Calu3 (cell line): ENCODE measurements at regions of chr2 and their contacts with region 1.

Region 1: DNA sequence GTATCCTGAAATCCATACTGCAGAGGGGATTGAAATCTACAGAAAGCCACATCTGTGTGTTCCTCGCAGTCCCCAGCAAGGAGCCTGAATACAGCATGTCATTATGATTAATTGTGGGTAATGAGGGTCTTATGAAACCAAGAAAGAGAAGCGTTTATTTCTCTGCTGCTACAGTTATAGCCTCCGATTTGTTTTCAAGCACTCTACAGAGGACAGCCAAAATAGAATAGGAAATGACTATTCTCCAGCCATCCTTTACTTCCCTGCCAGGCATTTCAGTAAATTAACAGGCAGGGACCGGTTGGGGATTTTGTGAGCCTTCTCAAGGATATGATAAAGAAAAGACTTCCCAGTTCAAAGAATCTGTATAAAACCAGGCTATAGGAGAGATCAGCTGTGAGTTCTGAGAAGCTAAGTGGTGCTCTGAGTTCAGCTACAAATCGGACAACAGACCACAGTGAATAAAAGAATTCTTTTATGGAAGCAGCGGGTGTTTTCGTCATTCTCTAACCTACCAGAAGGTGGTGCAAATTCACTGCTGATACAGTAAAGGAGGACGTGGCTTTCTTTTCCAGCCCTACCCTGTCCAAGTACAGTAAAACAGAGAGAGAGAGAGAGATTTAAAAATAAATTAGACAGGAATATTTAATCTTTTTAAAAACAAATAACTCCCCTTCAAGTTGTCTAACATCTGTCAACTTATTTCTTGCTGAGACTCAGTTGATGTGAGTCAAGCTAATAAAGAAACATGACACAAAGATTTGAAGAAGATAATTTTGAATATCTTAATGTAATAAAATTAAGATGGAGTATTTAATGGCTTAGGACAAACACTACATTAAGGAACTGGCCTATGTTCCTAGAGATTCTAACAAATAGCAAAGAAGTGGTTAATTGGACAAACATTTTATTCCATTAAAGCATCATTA is 133.7 kb downstream of the INSIG2 start:
- DNase-seq: peak; percentile 71
- H3K4me3 Mint-ChIP-seq: no peak overlapping the region
- H3K27ac Mint-ChIP-seq: peak overlapping the region; percentile 65
- H3K4me1 Mint-ChIP-seq: peaks cover 25% of the 10 kb centered on the region
- H3K27me3 Mint-ChIP-seq: no peaks in the 10 kb centered on the region
- CTCF ChIP-seq: peak; percentile 57

Region 2: GRCh38 chr2:118185210-118186109 is 36.5 kb before region 1 on chr2:
- CTCF ChIA-PET with region 1: no interaction called
- intact Hi-C with region 1: no loop called
- DNase-seq: peak; percentile 70
- H3K4me3 Mint-ChIP-seq: peak overlapping the region; percentile 85
- H3K27ac Mint-ChIP-seq: peak overlapping the region; percentile 91
- H3K4me1 Mint-ChIP-seq: peaks cover 37% of the 10 kb centered on the region
- H3K27me3 Mint-ChIP-seq: no peaks in the 10 kb centered on the region
- CTCF ChIP-seq: no peak

Region 3: DNA sequence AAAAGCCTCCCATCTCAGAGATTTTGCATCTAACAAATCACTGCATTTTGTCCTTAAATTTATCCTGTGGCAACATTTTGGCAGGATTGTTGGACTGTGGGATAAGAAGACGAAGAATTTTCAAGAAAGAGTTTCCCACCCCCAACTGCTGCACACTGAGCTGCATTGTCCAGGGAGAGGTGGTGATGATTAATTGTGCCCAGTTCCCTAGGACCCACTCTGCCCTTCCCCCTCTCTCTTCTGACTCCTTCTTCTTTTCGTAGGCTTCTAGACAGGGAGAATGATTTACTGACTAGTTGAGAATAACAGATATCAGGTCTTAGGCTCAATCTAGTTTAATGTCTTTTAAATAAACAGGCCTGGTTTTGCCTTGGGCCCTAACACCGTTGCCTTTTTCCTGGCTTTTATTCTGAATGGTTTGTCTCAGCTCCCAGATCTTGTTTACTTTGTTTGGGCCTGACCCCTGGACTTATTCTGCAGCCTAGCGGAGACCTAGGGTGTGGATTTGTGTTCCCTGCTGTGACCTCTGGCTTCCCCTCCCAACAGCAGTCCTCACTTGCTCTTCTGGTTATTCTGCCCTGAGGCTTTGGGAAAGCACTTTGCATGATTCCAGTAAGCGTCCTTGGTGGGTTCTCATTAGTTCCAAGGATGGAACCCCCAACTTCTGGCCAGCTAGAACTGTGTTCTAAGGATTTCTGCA is 99.7 kb after region 1 on chr2:
- CTCF ChIA-PET with region 1: no interaction called
- intact Hi-C with region 1: loop called (anchors 5 kb)
- DNase-seq: peak; percentile 15
- H3K4me3 Mint-ChIP-seq: no peak overlapping the region
- H3K27ac Mint-ChIP-seq: no peak overlapping the region
- H3K4me1 Mint-ChIP-seq: peaks cover 28% of the 10 kb centered on the region
- H3K27me3 Mint-ChIP-seq: no peaks in the 10 kb centered on the region
- CTCF ChIP-seq: no peak

Region 4: GRCh38 chr2:118371515-118371914 is 149.6 kb after region 1 on chr2:
- CTCF ChIA-PET with region 1: interaction called, 3 read pairs
- intact Hi-C with region 1: loop called (anchors 2 kb)
- DNase-seq: peak; percentile 57
- H3K4me3 Mint-ChIP-seq: no peak overlapping the region
- H3K27ac Mint-ChIP-seq: no peak overlapping the region
- H3K4me1 Mint-ChIP-seq: peaks cover 53% of the 10 kb centered on the region
- H3K27me3 Mint-ChIP-seq: no peaks in the 10 kb centered on the region
- CTCF ChIP-seq: peak; percentile 64

Region 5: DNA sequence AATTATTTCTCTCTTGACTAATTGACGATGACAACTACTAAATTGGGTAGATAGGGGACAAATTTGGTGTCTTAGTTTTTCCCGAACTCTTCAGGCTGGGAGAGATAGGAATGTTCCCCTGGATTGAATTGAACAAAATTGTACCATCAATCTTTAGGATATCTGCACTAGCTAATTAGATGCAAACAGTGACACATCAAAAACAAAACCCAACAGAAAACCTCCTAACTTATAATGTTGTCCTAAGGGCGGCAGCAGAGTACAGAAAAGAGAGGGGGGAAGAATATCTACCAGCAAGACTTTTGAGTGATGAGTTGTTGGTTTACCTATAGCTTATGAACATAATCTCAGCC is 209.2 kb after region 1 on chr2:
- CTCF ChIA-PET with region 1: interaction called, 5 read pairs
- intact Hi-C with region 1: loop called (anchors 5 kb)
- DNase-seq: peak; percentile 38
- H3K4me3 Mint-ChIP-seq: peak overlapping the region; percentile 3
- H3K27ac Mint-ChIP-seq: peak overlapping the region; percentile 74
- H3K4me1 Mint-ChIP-seq: peaks cover 51% of the 10 kb centered on the region
- H3K27me3 Mint-ChIP-seq: no peaks in the 10 kb centered on the region
- CTCF ChIP-seq: no peak

Region 6: DNA sequence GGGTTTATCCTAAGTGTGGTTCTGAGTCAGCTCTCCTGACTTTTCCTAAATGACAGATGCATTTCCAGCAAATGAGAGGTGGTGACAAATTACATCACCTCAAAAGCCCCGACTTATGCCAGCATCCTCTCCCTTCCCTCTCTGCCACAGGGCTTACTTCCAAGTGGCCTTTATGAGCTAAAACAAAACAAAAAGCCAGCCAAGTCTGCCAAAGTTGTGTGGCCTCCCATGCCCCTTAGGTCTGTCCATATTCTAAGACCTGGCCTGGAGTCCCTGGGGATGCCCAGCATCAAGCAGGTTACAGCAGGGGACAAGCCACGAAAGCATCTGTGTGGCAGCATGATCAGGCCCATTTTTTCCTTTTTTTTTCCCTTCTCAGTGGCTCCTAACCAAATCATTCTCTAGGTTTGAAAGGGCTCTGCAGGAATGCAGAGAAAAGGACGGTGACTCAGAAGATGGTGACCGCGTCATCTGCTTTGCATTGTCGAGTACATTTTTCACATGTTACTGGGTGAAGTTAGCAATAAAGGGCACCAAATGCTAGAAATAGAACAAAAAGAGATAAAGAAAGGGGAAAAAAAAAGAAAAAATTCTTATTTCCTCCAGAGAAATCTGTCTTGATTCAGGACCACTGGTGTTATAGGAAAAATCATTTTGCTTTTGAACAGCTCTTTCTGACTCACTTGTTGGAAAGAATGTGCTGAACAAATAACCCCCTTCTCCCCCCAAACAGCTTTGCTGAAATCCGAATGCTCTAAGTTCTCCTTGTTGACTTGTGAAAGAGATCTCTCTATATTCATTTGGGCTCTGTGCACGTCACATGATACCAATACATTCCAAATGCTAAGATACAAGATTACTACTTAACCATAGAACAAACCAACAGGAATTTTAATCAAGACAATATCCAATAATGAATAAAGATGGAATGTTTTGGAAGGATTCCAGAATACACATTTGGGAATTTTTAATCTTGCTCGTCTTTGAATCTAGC is 446.8 kb after region 1 on chr2:
- CTCF ChIA-PET with region 1: no interaction called
- intact Hi-C with region 1: loop called (anchors 10 kb)
- DNase-seq: peak; percentile 25
- H3K4me3 Mint-ChIP-seq: peak overlapping the region; percentile 40
- H3K27ac Mint-ChIP-seq: peak overlapping the region; percentile 56
- H3K4me1 Mint-ChIP-seq: peaks cover 31% of the 10 kb centered on the region
- H3K27me3 Mint-ChIP-seq: no peaks in the 10 kb centered on the region
- CTCF ChIP-seq: no peak

Region 7: DNA sequence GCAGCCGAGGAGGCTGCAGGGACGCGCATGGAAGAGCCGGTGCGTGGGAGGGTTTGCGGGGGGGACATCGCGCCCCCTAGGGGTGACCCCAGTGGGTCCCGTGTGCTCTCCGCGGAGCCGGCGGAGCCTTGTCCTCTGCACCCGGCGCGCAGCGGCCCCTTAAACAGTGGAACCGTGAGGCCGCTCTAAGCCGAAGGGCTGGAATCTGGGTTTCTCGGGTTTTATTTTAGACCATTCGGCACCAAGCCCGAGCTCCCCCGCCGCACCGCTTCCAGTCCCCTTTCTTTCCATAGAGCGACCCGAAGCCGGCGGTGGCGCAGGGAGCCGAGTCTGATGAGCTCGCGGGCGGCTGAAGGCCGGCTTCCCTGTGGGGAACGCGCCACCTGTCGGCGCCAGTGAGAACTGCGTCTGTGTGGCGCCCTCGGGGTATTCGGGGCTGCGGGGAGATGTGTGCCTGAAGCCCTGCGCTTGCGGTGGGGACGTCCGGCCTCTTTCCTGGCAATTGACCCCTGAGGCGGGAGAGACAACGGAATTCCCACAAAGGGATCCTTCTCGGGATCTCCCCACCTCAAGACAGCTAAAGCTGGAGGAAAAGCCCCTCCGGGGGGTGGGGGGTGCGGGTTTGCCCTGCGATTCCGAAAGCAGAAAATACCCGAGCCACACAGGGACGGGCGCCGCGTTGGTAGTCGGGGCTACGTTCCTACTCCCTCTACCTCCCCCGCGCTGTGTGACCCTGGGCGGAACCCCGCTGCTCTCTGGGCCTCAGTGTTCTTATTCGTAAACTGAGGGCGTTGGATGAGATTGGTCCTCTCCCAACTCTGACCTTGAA is 633.7 kb after region 1 on chr2:
- CTCF ChIA-PET with region 1: interaction called, 10 read pairs
- intact Hi-C with region 1: loop called (anchors 1 kb)
- DNase-seq: peak; percentile 93
- H3K4me3 Mint-ChIP-seq: peak overlapping the region; percentile 72
- H3K27ac Mint-ChIP-seq: no peak overlapping the region
- H3K4me1 Mint-ChIP-seq: no peaks in the 10 kb centered on the region
- H3K27me3 Mint-ChIP-seq: peaks cover 12% of the 10 kb centered on the region
- CTCF ChIP-seq: peak; percentile 91

Region 8: DNA sequence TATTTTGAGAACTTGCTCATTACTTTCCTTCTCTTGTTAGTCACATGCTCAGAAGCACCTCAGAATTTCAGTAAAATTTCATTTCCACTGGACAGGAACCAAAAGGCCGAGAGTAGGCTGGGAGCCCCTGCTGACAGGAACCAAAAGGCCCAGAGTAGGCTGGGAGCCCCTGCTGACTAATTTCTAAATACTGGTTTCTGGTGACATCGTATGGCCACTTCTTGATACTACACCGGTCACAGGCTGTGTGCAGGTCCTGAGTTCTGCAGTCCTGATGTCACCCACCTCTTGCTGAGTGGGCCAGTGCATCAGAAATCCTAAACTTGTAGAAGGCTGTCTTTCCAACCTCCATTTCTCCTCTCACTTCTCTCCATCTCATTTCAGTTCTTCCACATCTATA is 643.2 kb after region 1 on chr2:
- CTCF ChIA-PET with region 1: no interaction called
- intact Hi-C with region 1: loop called (anchors 1 kb)
- DNase-seq: peak; percentile 66
- H3K4me3 Mint-ChIP-seq: no peak overlapping the region
- H3K27ac Mint-ChIP-seq: no peak overlapping the region
- H3K4me1 Mint-ChIP-seq: peaks cover 11% of the 10 kb centered on the region
- H3K27me3 Mint-ChIP-seq: no peaks in the 10 kb centered on the region
- CTCF ChIP-seq: peak; percentile 84